SK-N-SH (cell line): ENCODE measurements at regions of chr3 and their contacts with region 1.

Region 1: GRCh38 chr3:24225385-24225950 is 269.2 kb downstream of the THRB start:
- DNase-seq: no peak
- H3K4me3 ChIP-seq: no peak overlapping the region
- H3K27ac ChIP-seq: no peak overlapping the region
- H3K4me1 ChIP-seq: peaks cover 2% of the 10 kb centered on the region in 2 experiments; a peak in 3 of 4 replicates
- H3K27me3 ChIP-seq: no peaks in the 10 kb centered on the region
- CTCF ChIP-seq: no peak
- EP300 ChIP-seq: no peak
- RAD21 ChIP-seq: no peak

Region 2: GRCh38 chr3:24237971-24238767 is 12.7 kb after region 1 on chr3:
- CTCF ChIA-PET with region 1: interaction called, 25 read pairs
- POLR2A ChIA-PET with region 1: no interaction called
- DNase-seq: peak; percentile 61
- H3K4me3 ChIP-seq: 0 out of 4 replicates have a peak overlapping the region, but pooled peaks of 1 of the 2 experiments have one; percentile 36
- H3K27ac ChIP-seq: peak overlapping the region; percentile 47 to 69; a peak in 3 of 4 replicates
- H3K4me1 ChIP-seq: peaks cover 0 to 18% of the 10 kb centered on the region in 2 experiments; a peak in 2 of 4 replicates
- H3K27me3 ChIP-seq: no peaks in the 10 kb centered on the region
- CTCF ChIP-seq: peak; percentile 71
- EP300 ChIP-seq: peak; percentile 58 to 91
- RAD21 ChIP-seq: peak; percentile 90